ENCODE measurements at regions of chr4 and their contacts with region 1.

Region 1: GRCh38 chr4:9762823-9763475 is 18.5 kb upstream of the DRD5 start:
- DNase-seq: peak in 6 of 10 donors; percentile 33 to 90 (median 66)

Region 2: GRCh38 chr4:9898596-9899305 is 135.8 kb after region 1 on chr4:
- intact Hi-C with region 1: loop called (anchors 5 kb)
- DNase-seq: peak in 2 of 10 donors; percentile 7 to 27

Region 3: GRCh38 chr4:10013722-10014121 is 250.8 kb after region 1 on chr4:
- intact Hi-C with region 1: loop called (anchors 1 kb)
- DNase-seq: peak in 3 of 10 donors; percentile 37 to 88 (median 59)

Region 4: DNA sequence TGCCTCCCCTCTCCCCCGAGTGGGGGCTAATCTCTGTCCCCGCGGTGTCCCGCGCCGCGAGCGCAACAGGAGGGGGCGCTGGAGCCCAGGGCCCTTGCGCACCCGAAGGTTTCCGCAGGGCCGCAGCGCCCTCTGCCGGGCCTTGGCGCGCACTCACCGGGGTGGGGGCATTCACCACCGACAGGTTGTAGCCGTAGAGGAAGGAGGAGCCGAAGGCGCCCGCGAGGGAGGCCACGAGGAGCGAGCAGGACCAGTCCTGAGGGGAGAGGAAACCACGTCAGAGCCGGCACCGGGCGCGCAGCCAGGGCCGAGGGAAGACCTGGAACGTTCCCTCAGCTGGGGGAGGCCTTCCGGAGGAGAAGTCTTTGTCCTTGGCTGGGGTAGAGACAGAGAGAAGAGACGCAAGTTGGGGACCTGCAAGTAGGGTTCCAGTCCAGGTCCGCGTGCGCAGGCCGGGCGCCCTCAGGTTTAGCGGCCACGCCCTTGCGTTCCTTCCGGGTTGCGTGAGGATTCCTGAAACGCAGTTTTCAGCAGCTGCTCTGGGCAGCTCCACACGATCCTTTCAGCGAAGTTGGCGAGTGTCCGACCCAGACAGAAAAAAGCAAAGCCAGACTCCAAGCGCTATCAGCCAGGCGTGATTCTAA is 256.0 kb after region 1 on chr4:
- intact Hi-C with region 1: loop called (anchors 1 kb)
- DNase-seq: peak; percentile 81 to 99 (median 93)

Region 5: DNA sequence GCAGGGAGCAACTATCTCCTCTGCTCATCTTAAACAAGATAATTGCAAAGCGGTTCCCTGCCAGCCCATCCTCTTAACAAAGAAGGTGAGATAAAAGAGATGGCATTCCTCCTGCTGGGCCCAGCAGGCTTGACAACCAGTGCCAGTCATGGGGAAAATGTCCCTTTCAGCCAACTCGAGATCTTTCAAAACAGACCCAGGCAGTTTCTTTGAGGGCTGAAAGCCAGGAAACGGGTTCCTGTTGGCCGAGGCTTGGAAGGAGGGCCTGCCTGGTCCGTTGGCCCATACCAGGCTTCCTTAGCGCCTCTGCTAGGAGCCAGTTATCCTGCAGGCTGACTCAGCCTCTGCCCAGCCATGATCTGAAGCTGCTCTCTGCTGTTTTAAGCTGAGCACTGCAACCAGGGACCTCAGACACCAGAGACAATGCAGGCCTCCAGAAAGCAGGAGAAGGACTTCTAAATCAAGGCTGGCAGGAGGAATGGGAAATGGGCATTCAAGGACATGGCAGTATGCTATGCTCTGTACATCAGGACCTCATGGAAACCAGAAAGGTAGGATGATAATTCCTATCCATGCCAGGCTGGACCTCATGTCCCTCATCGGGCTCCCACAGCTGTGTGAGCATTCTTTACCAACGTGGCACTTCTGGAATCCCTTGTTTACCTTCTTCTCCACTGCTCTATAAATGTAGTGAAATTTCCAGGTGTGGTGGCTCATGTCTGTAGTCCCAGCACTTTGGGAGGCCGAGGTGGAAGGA is 300.8 kb after region 1 on chr4:
- intact Hi-C with region 1: loop called (anchors 1 kb)
- DNase-seq: peak; percentile 46 to 96 (median 72)